ENCODE measurements at regions of chr12 and their contacts with region 1.

Region 1: DNA sequence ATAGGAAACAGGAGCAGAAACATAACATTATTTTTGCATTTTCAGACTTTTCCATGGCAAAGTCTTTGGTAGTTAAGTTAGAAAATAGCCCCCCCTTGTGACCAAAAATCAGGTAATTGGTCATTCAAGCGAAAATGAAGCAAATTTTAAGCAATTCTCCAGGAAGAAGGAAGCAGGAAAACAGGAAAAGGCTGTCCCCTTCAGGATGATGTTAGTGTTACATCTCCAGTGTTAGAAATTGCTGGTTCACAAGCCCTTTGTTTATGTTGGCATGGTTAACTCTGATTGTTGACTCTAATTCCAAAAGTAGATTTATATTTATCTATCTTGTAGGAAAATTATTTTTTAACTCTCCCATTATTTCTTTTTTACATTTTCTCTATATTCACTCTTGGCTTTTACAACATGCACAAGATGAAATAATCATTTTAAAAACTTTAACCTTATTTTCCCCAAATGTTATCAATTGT is 18.8 kb upstream of the GAS2L3 start:
- DNase-seq: peak in 3 of 14 experiments; percentile 24 to 45 (median 39)
- ATAC-seq: no peak
- H3K4me3 ChIP-seq: no peak overlapping the region
- H3K4me3 Mint-ChIP-seq: no peak overlapping the region
- H3K27ac ChIP-seq: no peak overlapping the region
- H3K27ac Mint-ChIP-seq: no peak overlapping the region
- H3K4me1 ChIP-seq: no peaks in the 10 kb centered on the region
- H3K4me1 Mint-ChIP-seq: no peaks in the 10 kb centered on the region
- H3K27me3 ChIP-seq: no peaks in the 10 kb centered on the region
- H3K27me3 Mint-ChIP-seq: peaks cover 20% of the 10 kb centered on the region
- CTCF ChIP-seq: peak; percentile 53

Region 2: GRCh38 chr12:99043319-99043914 is 1511.2 kb before region 1 on chr12:
- CTCF ChIA-PET with region 1: no interaction called
- POLR2A ChIA-PET with region 1: no interaction called
- intact Hi-C with region 1: loop called (anchors 2 to 10 kb)
- DNase-seq: peak in 9 of 14 experiments; percentile 3 to 56 (median 25)
- ATAC-seq: no peak
- H3K4me3 ChIP-seq: no peak overlapping the region
- H3K4me3 Mint-ChIP-seq: no peak overlapping the region
- H3K27ac ChIP-seq: no peak overlapping the region
- H3K27ac Mint-ChIP-seq: no peak overlapping the region
- H3K4me1 ChIP-seq: no peaks in the 10 kb centered on the region
- H3K4me1 Mint-ChIP-seq: no peaks in the 10 kb centered on the region
- H3K27me3 ChIP-seq: no peaks in the 10 kb centered on the region
- H3K27me3 Mint-ChIP-seq: peaks cover 15% of the 10 kb centered on the region
- CTCF ChIP-seq: peak; percentile 59

Region 3: DNA sequence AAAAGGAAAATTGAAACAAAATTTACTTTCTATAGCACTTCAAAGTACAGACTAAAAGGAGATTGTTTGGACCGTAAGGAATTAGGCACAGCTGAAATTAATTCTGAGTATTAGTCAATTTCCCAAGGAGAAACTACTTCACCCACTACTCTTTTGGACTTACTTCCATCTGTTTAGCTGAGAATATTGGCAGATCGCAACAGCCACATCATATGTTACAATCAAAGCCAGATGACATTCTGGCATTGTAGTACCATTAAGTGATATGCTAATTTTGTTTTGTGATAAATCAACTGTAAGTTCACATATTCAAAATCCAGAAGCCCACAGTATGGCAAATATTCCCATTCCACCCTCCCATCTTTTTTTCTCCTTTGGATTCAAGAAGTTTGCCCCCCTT is 522.8 kb before region 1 on chr12:
- CTCF ChIA-PET with region 1: no interaction called
- POLR2A ChIA-PET with region 1: no interaction called
- intact Hi-C with region 1: no loop called
- DNase-seq: no peak
- ATAC-seq: no peak
- H3K4me3 ChIP-seq: no peak overlapping the region
- H3K4me3 Mint-ChIP-seq: no peak overlapping the region
- H3K27ac ChIP-seq: no peak overlapping the region
- H3K27ac Mint-ChIP-seq: no peak overlapping the region
- H3K4me1 ChIP-seq: no peaks in the 10 kb centered on the region
- H3K4me1 Mint-ChIP-seq: no peaks in the 10 kb centered on the region
- H3K27me3 ChIP-seq: no peaks in the 10 kb centered on the region
- H3K27me3 Mint-ChIP-seq: no peaks in the 10 kb centered on the region
- CTCF ChIP-seq: no peak

Region 4: DNA sequence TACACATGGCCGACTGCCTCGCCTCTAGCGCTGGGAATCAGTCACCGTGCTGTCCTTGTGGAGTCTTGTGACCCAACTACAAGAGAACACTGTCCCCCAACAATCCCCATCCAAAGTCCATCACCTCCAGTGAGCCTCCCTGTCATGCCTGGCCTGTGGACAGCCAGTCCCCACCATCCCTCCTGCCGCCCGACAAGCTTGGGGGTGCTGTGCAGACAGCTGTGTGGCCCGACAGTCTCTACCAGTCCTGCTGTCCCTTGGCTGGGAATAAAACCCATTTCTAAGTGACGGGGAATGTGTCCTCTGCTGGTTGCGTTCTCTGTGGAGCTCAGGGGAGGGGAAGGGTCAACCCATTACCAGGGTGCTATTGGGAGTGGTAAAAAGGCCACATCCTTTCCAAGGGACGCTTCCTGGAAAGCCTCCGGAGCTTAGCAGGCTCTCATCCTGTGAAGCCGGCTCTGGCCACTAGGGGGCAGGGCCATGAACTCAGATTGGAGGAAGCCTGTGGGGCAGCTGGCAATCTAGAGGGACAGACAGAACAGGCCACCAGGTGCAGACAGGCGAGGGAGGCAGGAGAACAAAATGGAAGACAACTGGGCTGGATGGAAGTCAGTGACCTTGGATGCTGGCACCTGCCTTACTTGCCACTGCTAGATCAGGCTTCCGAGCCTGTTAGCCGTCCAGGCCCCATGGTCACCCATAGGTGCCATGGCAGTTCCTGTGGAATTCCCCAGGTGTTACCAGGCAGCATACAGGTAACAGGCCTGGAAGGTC is 400.0 kb before region 1 on chr12:
- CTCF ChIA-PET with region 1: no interaction called
- POLR2A ChIA-PET with region 1: no interaction called
- intact Hi-C with region 1: loop called in 1 of 2 experiments (anchors 10 kb)
- DNase-seq: peak; percentile 53 to 82 (median 64)
- ATAC-seq: peak; percentile 74
- H3K4me3 ChIP-seq: no peak overlapping the region
- H3K4me3 Mint-ChIP-seq: no peak overlapping the region
- H3K27ac ChIP-seq: no peak overlapping the region
- H3K27ac Mint-ChIP-seq: no peak overlapping the region
- H3K4me1 ChIP-seq: peaks cover 6% of the 10 kb centered on the region
- H3K4me1 Mint-ChIP-seq: peaks cover 4% of the 10 kb centered on the region
- H3K27me3 ChIP-seq: no peaks in the 10 kb centered on the region
- H3K27me3 Mint-ChIP-seq: no peaks in the 10 kb centered on the region
- CTCF ChIP-seq: peak; percentile 86